ENCODE measurements at regions of chr22 and their contacts with region 1.

Region 1: GRCh38 chr22:20568989-20569769 is 61.8 kb downstream of the MED15 start:
- H3K4me3 ChIP-seq: no peak overlapping the region
- H3K27ac ChIP-seq: no peak overlapping the region
- H3K4me1 ChIP-seq: no peaks in the 10 kb centered on the region
- CTCF ChIP-seq: no peak

Region 2: GRCh38 chr22:20430720-20431510 is 138.3 kb before region 1 on chr22:
- CTCF ChIA-PET with region 1: no interaction called
- POLR2A ChIA-PET with region 1: no interaction called
- H3K4me3 ChIP-seq: no peak overlapping the region
- H3K27ac ChIP-seq: no peak overlapping the region
- H3K4me1 ChIP-seq: no peaks in the 10 kb centered on the region
- CTCF ChIP-seq: no peak

Region 3: GRCh38 chr22:20507253-20508066 is 61.7 kb before region 1 on chr22 and contains the start of gene MED15:
- CTCF ChIA-PET with region 1: interaction called, 23 read pairs
- POLR2A ChIA-PET with region 1: interaction called, 7 read pairs
- H3K4me3 ChIP-seq: peak within 1 kb of the TSS; percentile 95
- H3K27ac ChIP-seq: peak within 1 kb of the TSS; percentile 44
- H3K4me1 ChIP-seq: peaks cover 9% of the 10 kb centered on the region
- CTCF ChIP-seq: 0 out of 2 replicates have a peak, but pooled peaks have one; percentile 11

Region 4: GRCh38 chr22:20531315-20532201 is 37.6 kb before region 1 on chr22:
- CTCF ChIA-PET with region 1: interaction called, 40 read pairs
- POLR2A ChIA-PET with region 1: no interaction called
- H3K4me3 ChIP-seq: no peak overlapping the region
- H3K27ac ChIP-seq: peak overlapping the region; percentile 65
- H3K4me1 ChIP-seq: peaks cover 17% of the 10 kb centered on the region
- CTCF ChIP-seq: no peak

Region 5: DNA sequence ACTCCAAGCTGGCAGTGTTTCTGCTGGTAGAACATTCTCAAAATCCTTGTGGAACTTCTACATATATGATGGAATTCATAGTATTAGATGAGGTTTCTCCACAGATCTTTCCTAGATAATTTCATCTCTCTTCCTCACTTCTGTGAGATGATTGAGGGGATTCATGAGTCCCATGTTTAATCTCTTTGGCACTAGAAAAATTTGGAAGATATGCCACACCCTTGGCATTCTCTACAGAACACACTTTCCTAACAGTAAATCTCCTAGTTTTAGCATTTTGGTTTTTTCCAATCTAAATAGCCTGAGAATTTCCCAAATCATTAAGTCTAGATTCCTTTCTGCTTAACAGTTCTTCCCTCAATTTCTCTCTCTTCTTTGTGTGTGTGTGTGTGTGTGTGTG is 26.4 kb before region 1 on chr22:
- CTCF ChIA-PET with region 1: interaction called, 44 read pairs
- POLR2A ChIA-PET with region 1: no interaction called
- H3K4me3 ChIP-seq: no peak overlapping the region
- H3K27ac ChIP-seq: no peak overlapping the region
- H3K4me1 ChIP-seq: no peaks in the 10 kb centered on the region
- CTCF ChIP-seq: no peak

Region 6: GRCh38 chr22:20558567-20559205 is 10.5 kb before region 1 on chr22:
- CTCF ChIA-PET with region 1: interaction called, 85 read pairs
- POLR2A ChIA-PET with region 1: interaction called, 3 read pairs
- H3K4me3 ChIP-seq: no peak overlapping the region
- H3K27ac ChIP-seq: no peak overlapping the region
- H3K4me1 ChIP-seq: no peaks in the 10 kb centered on the region
- CTCF ChIP-seq: no peak

Region 7: GRCh38 chr22:20591660-20592310 is 22.6 kb after region 1 on chr22:
- CTCF ChIA-PET with region 1: interaction called, 17 read pairs
- POLR2A ChIA-PET with region 1: no interaction called
- H3K4me3 ChIP-seq: no peak overlapping the region
- H3K27ac ChIP-seq: no peak overlapping the region
- H3K4me1 ChIP-seq: no peaks in the 10 kb centered on the region
- CTCF ChIP-seq: no peak

Measured in HEK293 (cell line).